A673 (cell line): ENCODE measurements at regions of chr1 and their contacts with region 1.

Region 1: GRCh38 chr1:8604041-8604945 is 213.1 kb downstream of the RERE start:
- DNase-seq: peak; percentile 94
- H3K4me3 ChIP-seq: no peak overlapping the region
- H3K27ac ChIP-seq: peak overlapping the region; percentile 98
- H3K4me1 ChIP-seq: peaks cover 93% of the 10 kb centered on the region
- H3K27me3 ChIP-seq: no peaks in the 10 kb centered on the region
- CTCF ChIP-seq: no peak

Region 2: GRCh38 chr1:7856345-7856744 is 747.9 kb before region 1 on chr1:
- CTCF ChIA-PET with region 1: no interaction called
- POLR2A ChIA-PET with region 1: no interaction called
- intact Hi-C with region 1: loop called (anchors 5 kb)
- DNase-seq: peak; percentile 18
- H3K4me3 ChIP-seq: no peak overlapping the region
- H3K27ac ChIP-seq: peak overlapping the region; percentile 40
- H3K4me1 ChIP-seq: peaks cover 53% of the 10 kb centered on the region
- H3K27me3 ChIP-seq: no peaks in the 10 kb centered on the region
- CTCF ChIP-seq: no peak

Region 3: GRCh38 chr1:8423650-8424538 is 180.4 kb before region 1 on chr1:
- CTCF ChIA-PET with region 1: interaction called, 11 read pairs
- POLR2A ChIA-PET with region 1: no interaction called
- intact Hi-C with region 1: no loop called
- DNase-seq: peak; percentile 85
- H3K4me3 ChIP-seq: peak overlapping the region; percentile 79
- H3K27ac ChIP-seq: peak overlapping the region; percentile 87
- H3K4me1 ChIP-seq: peaks cover 43% of the 10 kb centered on the region
- H3K27me3 ChIP-seq: no peaks in the 10 kb centered on the region
- CTCF ChIP-seq: no peak

Region 4: GRCh38 chr1:8448911-8449661 is 155.2 kb before region 1 on chr1:
- CTCF ChIA-PET with region 1: no interaction called
- POLR2A ChIA-PET with region 1: interaction called, 11 read pairs
- intact Hi-C with region 1: no loop called
- DNase-seq: no peak
- H3K4me3 ChIP-seq: no peak overlapping the region
- H3K27ac ChIP-seq: no peak overlapping the region
- H3K4me1 ChIP-seq: peaks cover 17% of the 10 kb centered on the region
- H3K27me3 ChIP-seq: no peaks in the 10 kb centered on the region
- CTCF ChIP-seq: no peak

Region 5: GRCh38 chr1:8660411-8660828 is 56.1 kb after region 1 on chr1:
- CTCF ChIA-PET with region 1: no interaction called
- POLR2A ChIA-PET with region 1: interaction called, 13 read pairs
- intact Hi-C with region 1: loop called (anchors 2 kb)
- DNase-seq: peak; percentile 92
- H3K4me3 ChIP-seq: peak overlapping the region; percentile 5
- H3K27ac ChIP-seq: peak overlapping the region; percentile 95
- H3K4me1 ChIP-seq: peaks cover 61% of the 10 kb centered on the region
- H3K27me3 ChIP-seq: no peaks in the 10 kb centered on the region
- CTCF ChIP-seq: no peak

Region 6: GRCh38 chr1:8702850-8703810 is 98.8 kb after region 1 on chr1:
- CTCF ChIA-PET with region 1: no interaction called
- POLR2A ChIA-PET with region 1: no interaction called
- intact Hi-C with region 1: loop called (anchors 10 kb)
- DNase-seq: peak; percentile 98
- H3K4me3 ChIP-seq: peak overlapping the region; percentile 72
- H3K27ac ChIP-seq: peak overlapping the region; percentile 95
- H3K4me1 ChIP-seq: peaks cover 64% of the 10 kb centered on the region
- H3K27me3 ChIP-seq: no peaks in the 10 kb centered on the region
- CTCF ChIP-seq: no peak